Head of caudate nucleus (tissue), 42 donors: ENCODE measurements at regions of chr20 and their contacts with region 1.

Region 1: DNA sequence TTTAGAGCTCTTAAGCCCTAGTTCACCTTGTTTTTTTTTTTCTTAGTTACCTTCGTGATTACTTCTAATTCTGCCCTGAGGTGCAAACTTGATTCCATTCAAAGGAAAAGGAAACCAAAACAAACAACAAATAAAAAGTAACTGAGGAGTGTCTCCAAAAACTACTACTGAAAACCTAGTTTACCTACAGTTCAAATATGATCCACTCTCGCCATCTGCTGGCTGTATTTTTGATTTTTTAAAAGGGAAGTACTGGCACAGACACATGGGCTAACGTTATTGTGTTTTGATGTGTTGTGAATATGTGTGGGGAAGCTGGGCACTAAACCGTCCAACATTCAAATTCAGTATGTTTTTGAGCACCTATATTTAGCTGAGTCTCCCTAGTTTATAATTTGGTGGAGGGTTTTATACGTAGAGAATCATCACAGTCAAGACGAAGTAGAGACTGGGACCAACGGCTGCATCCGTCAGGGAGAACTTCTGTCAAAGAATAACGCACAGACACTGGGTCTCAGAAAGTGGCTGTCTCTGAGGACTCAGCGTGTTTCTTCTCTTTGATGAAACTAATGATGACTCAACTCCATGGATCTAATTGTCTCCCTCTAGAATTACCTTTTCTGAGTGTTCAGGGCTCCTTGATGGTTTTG is 373.5 kb upstream of the BTBD3 start:
- DNase-seq: peak in 18 of 42 donors; percentile 22 to 79 (median 54)

Region 2: GRCh38 chr20:10469599-10469998 is 1074.6 kb before region 1 on chr20:
- intact Hi-C with region 1: loop called (anchors 10 kb)
- DNase-seq: peak in 25 of 42 donors; percentile 15 to 78 (median 50)

Region 3: DNA sequence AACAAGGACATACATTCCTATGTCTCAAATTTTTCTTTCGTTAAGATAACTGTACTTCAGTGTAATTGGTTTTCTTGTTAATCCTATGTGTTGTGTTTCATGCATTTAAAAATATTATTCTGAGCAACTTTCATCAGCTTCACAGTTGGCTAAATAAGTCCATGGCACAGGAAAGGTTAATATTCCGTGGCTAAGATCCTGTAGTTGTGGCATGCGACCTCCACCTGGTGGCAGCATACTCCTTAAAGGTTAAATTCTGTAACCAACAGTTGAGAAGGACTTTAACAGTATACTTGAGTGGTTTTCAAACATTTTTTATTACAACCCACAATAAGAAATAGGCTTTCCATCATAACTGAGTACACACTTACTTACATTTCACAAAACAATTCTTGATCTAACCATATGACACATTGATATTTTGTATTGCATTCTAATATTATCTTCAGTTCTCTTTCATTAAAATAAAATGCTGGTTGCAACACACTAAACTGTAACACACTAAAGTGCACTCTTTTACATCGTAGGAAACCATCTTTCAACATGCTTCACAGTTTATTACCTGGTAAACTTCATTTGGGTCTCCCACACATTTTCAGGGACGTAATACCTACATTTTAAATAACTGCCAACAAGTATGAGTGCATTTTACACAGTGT is 990.7 kb before region 1 on chr20:
- intact Hi-C with region 1: loop called (anchors 10 kb)
- DNase-seq: peak; percentile 20 to 85 (median 64)

Region 4: GRCh38 chr20:11436113-11436905 is 107.8 kb before region 1 on chr20:
- intact Hi-C with region 1: no loop called
- DNase-seq: no peak